Posterior vena cava (tissue), 2 donors: ENCODE measurements at regions of chr1 and their contacts with region 1.

Region 1: DNA sequence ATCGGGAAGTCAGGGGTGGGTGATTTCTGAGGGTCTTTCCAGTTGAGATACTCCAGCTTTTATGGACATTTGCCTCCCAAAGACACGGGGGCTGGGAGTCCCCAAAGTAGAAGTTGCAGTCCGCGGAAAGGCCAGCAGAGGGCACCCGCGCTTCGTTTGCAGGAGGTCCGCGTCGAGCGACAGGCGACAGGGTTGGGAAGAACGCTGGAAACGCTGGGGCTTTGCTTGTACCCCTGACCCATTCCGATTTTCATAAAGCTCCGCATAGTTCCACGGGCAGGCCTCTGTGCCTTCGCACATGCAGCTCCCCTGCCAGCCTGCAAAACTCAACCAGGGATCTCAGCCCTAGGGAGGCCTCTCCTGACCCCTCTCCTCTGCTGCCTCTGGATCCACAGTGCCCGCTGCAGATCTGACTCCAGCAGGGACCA is 44.2 kb upstream of the LAPTM5 start:
- DNase-seq: peak; percentile 95

Region 2: DNA sequence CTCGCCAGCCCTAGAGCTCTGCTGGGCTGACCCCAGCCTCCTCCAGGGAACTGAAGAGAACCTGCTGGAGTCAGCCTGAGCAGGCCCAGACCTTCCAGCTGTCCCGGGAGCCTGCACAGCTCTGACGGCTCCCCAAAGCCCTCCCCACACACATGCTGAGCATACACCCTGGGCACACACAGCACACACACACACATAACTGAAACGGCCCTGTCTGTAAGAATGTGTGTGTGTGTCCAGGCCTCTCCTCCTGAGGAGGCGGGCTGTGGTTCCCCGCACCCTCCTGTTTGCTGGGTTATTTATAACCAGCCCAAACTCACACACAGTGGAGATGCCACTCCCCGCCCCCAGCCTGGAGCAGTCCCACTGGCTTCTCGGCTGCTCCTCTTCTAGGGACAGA is 86.6 kb after region 1 on chr1:
- intact Hi-C with region 1: no loop called
- DNase-seq: peak; percentile 88

Region 3: DNA sequence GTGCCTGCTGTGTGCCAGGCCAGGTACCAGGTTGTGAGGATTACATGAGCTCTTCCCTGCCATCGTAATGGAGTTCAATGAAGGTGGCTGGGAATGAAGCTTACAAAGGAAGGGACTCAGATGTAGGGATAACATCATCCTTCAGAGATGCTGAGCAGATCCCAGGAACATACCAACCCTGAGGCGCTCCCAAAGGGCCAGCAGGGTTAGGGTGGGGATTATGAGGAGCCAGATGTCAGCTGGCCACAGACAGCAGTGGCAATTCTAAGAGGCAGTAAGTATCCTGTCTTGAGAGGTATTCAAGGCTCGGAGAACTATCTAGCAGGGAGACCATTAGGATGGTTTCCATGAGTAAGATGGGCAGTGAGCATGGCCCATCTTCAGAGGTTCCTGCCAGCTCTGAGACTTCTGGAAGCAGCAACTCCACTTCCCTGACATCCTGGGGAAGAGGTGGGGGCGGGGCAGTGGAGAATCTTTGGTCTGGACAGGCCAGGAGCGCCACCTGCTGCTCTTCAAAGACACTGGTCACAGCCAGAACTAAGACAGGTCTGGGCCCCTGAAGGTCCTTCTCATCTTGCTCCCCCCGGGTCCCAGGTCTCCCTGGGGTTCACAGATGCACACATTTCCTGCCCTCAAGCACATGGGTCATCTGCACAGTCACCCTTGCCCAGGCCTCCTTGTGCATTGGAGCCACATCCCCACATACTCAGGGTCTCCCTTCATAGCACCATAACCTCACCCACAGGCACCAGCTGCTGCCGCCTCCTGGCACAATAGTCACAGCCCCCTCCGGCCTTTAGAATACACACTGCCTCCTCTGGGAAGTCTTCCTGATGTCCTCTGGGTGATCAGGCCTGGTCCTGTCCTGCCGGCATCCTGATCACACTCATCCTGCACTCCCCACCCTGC is 109.5 kb after region 1 on chr1:
- intact Hi-C with region 1: loop called (anchors 2 kb)
- DNase-seq: peak; percentile 95

Region 4: GRCh38 chr1:31306278-31306677 is 504.5 kb after region 1 on chr1:
- intact Hi-C with region 1: loop called in 1 of 2 experiments (anchors 10 kb)
- DNase-seq: no peak